Activated CD8-positive, alpha-beta T cell treated with anti-CD3 and anti-CD28 coated beads, Interleukin-2, amount 10 ng/mL, durations not matched to agents 7 days and 5 days (primary cell): ENCODE measurements at regions of chr14 and their contacts with region 1.

Region 1: GRCh38 chr14:77097700-77098528 is at the start of gene CIPC:
- DNase-seq: peak; percentile 100
- ATAC-seq: peak; percentile 94
- H3K4me3 Mint-ChIP-seq: peak within 1 kb of the TSS; percentile 84
- H3K27ac Mint-ChIP-seq: peak within 1 kb of the TSS; percentile 93
- H3K4me1 Mint-ChIP-seq: peaks cover 31% of the 10 kb centered on the region
- H3K27me3 Mint-ChIP-seq: peaks cover 4% of the 10 kb centered on the region
- total RNA-seq, gene CIPC: 11.4 to 11.7 TPM

Region 2: DNA sequence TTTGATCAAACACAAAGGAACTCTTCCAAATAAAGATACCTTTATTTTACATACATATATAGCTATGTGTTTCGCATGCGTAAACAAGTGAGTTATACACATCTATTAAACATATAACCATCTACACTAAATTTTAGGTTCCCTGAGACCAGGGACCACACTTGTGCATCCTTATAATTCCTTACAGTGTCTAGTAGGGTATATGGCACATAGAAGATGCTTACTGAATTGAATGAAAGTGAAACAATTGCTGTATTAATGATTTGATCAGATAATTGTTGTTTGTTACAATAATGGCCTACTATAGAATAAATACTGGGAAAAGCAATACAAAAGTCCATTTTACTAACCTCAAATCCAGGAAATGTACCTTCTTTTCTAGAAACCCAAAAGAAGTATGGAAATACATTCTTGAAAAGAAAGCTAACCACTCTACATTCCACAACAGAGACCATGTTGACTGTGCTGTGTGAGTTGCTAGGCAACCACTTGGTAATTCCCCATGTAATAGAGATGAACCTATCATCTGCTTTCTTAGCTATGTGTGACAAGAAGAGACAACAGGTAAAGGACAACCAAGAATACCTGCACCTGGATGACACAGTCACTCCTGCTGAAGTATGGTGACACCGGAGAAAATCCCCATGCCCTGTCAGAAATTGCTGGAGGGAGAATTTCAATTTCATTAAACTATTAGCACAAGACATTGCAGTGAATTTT is 11.7 kb before region 1 on chr14:
- CTCF ChIA-PET with region 1: interaction called, 20 read pairs
- POLR2A ChIA-PET with region 1: interaction called, 3 read pairs
- DNase-seq: no peak
- ATAC-seq: peak; percentile 49
- H3K4me3 Mint-ChIP-seq: no peak overlapping the region
- H3K27ac Mint-ChIP-seq: no peak overlapping the region
- H3K4me1 Mint-ChIP-seq: peaks cover 4% of the 10 kb centered on the region
- H3K27me3 Mint-ChIP-seq: peaks cover 6% of the 10 kb centered on the region

Region 3: GRCh38 chr14:77124345-77125280 is 26.7 kb after region 1 on chr14:
- CTCF ChIA-PET with region 1: interaction called, 26 read pairs
- POLR2A ChIA-PET with region 1: interaction called, 8 read pairs
- DNase-seq: peak; percentile 56
- ATAC-seq: peak; percentile 87
- H3K4me3 Mint-ChIP-seq: peak overlapping the region; percentile 70
- H3K27ac Mint-ChIP-seq: no peak overlapping the region
- H3K4me1 Mint-ChIP-seq: peaks cover 40% of the 10 kb centered on the region
- H3K27me3 Mint-ChIP-seq: peaks cover 47% of the 10 kb centered on the region

Region 4: GRCh38 chr14:77228056-77228455 is 130.1 kb after region 1 on chr14:
- CTCF ChIA-PET with region 1: no interaction called
- POLR2A ChIA-PET with region 1: no interaction called
- DNase-seq: no peak
- ATAC-seq: no peak
- H3K4me3 Mint-ChIP-seq: no peak overlapping the region
- H3K27ac Mint-ChIP-seq: no peak overlapping the region
- H3K4me1 Mint-ChIP-seq: no peaks in the 10 kb centered on the region
- H3K27me3 Mint-ChIP-seq: no peaks in the 10 kb centered on the region